ENCODE measurements at regions of chr6 and their contacts with region 1.

Region 1: DNA sequence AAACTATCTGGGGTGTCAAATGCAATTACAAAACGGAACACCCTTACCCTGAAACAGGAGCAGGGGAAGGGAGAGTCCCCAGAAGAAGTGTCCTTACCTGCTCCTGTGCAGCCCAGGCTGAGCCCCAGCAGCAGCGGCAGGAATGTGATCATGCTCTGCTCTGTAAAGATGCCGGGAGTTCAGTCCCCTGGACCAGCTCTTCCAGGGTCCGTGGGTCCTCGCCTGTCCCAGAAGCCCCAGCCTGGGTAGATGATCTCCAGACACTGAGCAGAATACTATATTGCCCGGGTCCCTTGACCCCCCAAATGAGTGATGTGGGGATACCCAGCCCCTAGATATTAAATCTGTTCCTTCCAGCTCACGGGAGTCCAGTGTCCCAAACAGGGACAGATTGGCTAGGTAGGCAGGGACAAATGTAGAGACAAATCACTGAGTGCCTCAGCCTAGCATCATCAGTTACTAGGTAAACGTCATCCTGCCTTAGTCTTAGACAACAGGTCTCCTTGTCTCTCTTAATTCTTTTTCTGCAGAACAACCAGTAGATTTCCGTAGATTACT is at the start of gene HLA-DMB:
- DNase-seq: peak; percentile 91
- ATAC-seq: peak; percentile 51
- H3K4me3 ChIP-seq: peak within 1 kb of the TSS; percentile 95 to 100 (median 96)
- H3K4me3 Mint-ChIP-seq: peak within 1 kb of the TSS; percentile 96
- H3K27ac ChIP-seq: peak within 1 kb of the TSS; percentile 97 to 98
- H3K27ac Mint-ChIP-seq: peak within 1 kb of the TSS; percentile 99
- H3K4me1 ChIP-seq: peaks cover 66 to 82% of the 10 kb centered on the region in 2 donors
- H3K4me1 Mint-ChIP-seq: peaks cover 80% of the 10 kb centered on the region
- H3K27me3 ChIP-seq: no peaks in the 10 kb centered on the region
- H3K27me3 Mint-ChIP-seq: no peaks in the 10 kb centered on the region
- CTCF ChIP-seq: no peak
- total RNA-seq, gene HLA-DMB: 587 and 593 TPM in 2 replicates

Region 2: DNA sequence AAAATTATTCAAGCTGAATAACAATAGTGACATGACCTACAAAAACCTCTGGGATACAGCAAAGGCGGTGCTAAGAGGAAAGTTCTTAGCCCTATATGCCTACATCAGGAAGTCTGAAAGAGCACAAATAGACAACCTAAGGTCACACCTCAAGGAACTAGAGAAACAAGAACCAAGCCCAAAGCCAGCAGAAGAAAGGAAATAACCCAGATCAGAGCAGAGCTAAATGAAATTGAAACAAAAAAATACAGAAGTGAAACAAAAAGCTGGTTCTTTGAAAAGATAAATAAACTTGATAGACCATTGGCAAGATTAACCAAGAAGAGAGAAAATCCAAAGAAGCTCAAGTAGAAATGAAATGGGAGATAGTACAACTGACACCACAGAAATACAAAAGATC is 669.3 kb before region 1 on chr6:
- CTCF ChIA-PET with region 1: no interaction called
- POLR2A ChIA-PET with region 1: no interaction called
- intact Hi-C with region 1: loop called (anchors 5 kb)
- DNase-seq: peak; percentile 85
- ATAC-seq: peak; percentile 80
- H3K4me3 ChIP-seq: peak overlapping the region in 1 of 5 experiments; percentile 40
- H3K4me3 Mint-ChIP-seq: peak overlapping the region; percentile 44
- H3K27ac ChIP-seq: peak overlapping the region; percentile 61 to 74
- H3K27ac Mint-ChIP-seq: peak overlapping the region; percentile 81
- H3K4me1 ChIP-seq: peaks cover 62% of the 10 kb centered on the region in 2 donors
- H3K4me1 Mint-ChIP-seq: peaks cover 60% of the 10 kb centered on the region
- H3K27me3 ChIP-seq: no peaks in the 10 kb centered on the region
- H3K27me3 Mint-ChIP-seq: no peaks in the 10 kb centered on the region
- CTCF ChIP-seq: no peak

Region 3: DNA sequence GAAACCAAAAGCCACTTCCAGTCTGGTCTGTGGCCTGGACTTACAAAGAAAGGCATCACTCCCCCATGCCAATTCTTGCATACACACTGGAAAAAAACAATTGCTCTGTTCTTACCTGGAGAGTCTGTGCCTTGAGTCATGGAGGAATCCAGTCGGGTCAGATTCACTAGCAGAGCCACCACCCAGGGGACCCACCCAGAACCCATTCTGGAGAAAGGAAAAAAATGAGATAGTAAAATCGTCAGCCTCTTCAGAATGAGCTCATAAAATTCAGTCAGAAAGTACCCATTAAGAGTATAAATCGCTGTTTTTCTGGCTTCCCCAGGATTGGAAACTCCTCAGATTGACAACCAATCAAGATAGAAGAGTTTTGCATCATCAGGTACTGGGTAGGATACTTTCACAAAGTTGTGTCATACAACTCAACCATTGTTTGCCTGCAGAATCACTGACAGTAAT is 124.0 kb before region 1 on chr6 and contains the start of gene HLA-DOB:
- CTCF ChIA-PET with region 1: no interaction called
- POLR2A ChIA-PET with region 1: no interaction called
- intact Hi-C with region 1: loop called (anchors 10 kb)
- DNase-seq: peak; percentile 87
- ATAC-seq: peak; percentile 76
- H3K4me3 ChIP-seq: peak within 1 kb of the TSS; percentile 91 to 97 (median 95)
- H3K4me3 Mint-ChIP-seq: peak within 1 kb of the TSS; percentile 99
- H3K27ac ChIP-seq: peak within 1 kb of the TSS; percentile 92 to 98
- H3K27ac Mint-ChIP-seq: peak within 1 kb of the TSS; percentile 99
- H3K4me1 ChIP-seq: peaks cover 77 to 80% of the 10 kb centered on the region in 2 donors
- H3K4me1 Mint-ChIP-seq: peaks cover 90% of the 10 kb centered on the region
- H3K27me3 ChIP-seq: no peaks in the 10 kb centered on the region
- H3K27me3 Mint-ChIP-seq: no peaks in the 10 kb centered on the region
- CTCF ChIP-seq: no peak
- total RNA-seq, gene HLA-DOB: 109 TPM in 2 replicates

Region 4: GRCh38 chr6:32853541-32854375 is 87.0 kb before region 1 on chr6 and contains the starts of genes PSMB9 and TAP1:
- CTCF ChIA-PET with region 1: interaction called, 5 read pairs
- POLR2A ChIA-PET with region 1: interaction called, 14 read pairs
- intact Hi-C with region 1: no loop called
- DNase-seq: peak; percentile 98
- ATAC-seq: peak; percentile 82
- H3K4me3 ChIP-seq: peak within 1 kb of the TSS; percentile 91 to 98 (median 94)
- H3K4me3 Mint-ChIP-seq: peak within 1 kb of the TSS; percentile 99
- H3K27ac ChIP-seq: peak within 1 kb of the TSS; percentile 98 to 99
- H3K27ac Mint-ChIP-seq: peak within 1 kb of the TSS; percentile 100
- H3K4me1 ChIP-seq: peaks cover 60 to 63% of the 10 kb centered on the region in 2 donors
- H3K4me1 Mint-ChIP-seq: peaks cover 75% of the 10 kb centered on the region
- H3K27me3 ChIP-seq: no peaks in the 10 kb centered on the region
- H3K27me3 Mint-ChIP-seq: no peaks in the 10 kb centered on the region
- CTCF ChIP-seq: peak; percentile 81
- total RNA-seq, gene PSMB9: 174 and 181 TPM in 2 replicates
- total RNA-seq, gene TAP1: 126 and 131 TPM in 2 replicates

Region 5: GRCh38 chr6:32920715-32921114 is 20.0 kb before region 1 on chr6:
- CTCF ChIA-PET with region 1: interaction called, 8 read pairs
- POLR2A ChIA-PET with region 1: interaction called, 10 read pairs
- intact Hi-C with region 1: loop called (anchors 1 kb)
- DNase-seq: peak; percentile 44
- ATAC-seq: peak; percentile 51
- H3K4me3 ChIP-seq: peak overlapping the region in 2 of 5 experiments; percentile 18 to 47
- H3K4me3 Mint-ChIP-seq: peak overlapping the region; percentile 21
- H3K27ac ChIP-seq: peak overlapping the region; percentile 21 to 58
- H3K27ac Mint-ChIP-seq: peak overlapping the region; percentile 57
- H3K4me1 ChIP-seq: peaks cover 33 to 57% of the 10 kb centered on the region in 2 donors
- H3K4me1 Mint-ChIP-seq: peaks cover 65% of the 10 kb centered on the region
- H3K27me3 ChIP-seq: no peaks in the 10 kb centered on the region
- H3K27me3 Mint-ChIP-seq: no peaks in the 10 kb centered on the region
- CTCF ChIP-seq: no peak

Measured in B cell (primary cell).